ENCODE measurements at regions of chr1 and their contacts with region 1.

Region 1: GRCh38 chr1:32716312-32717148 is 14.0 kb upstream of the SYNC start:
- DNase-seq: peak; percentile 96 to 97
- H3K4me3 ChIP-seq: no peak overlapping the region; the same call in 1 of the 2 replicates
- H3K4me3 Mint-ChIP-seq: no peak overlapping the region
- H3K27ac Mint-ChIP-seq: peak overlapping the region; percentile 84
- H3K4me1 ChIP-seq: peaks cover 18% of the 10 kb centered on the region
- H3K4me1 Mint-ChIP-seq: peaks cover 8% of the 10 kb centered on the region
- H3K27me3 ChIP-seq: no peaks in the 10 kb centered on the region
- H3K27me3 Mint-ChIP-seq: no peaks in the 10 kb centered on the region
- CTCF ChIP-seq: no peak

Region 2: GRCh38 chr1:32729254-32730046 is 12.9 kb after region 1 on chr1:
- CTCF ChIA-PET with region 1: interaction called, 12 read pairs
- POLR2A ChIA-PET with region 1: interaction called, 4 read pairs
- intact Hi-C with region 1: no loop called
- DNase-seq: no peak
- H3K4me3 ChIP-seq: no peak overlapping the region
- H3K4me3 Mint-ChIP-seq: no peak overlapping the region
- H3K27ac Mint-ChIP-seq: no peak overlapping the region
- H3K4me1 ChIP-seq: peaks cover 5% of the 10 kb centered on the region
- H3K4me1 Mint-ChIP-seq: peaks cover 9% of the 10 kb centered on the region
- H3K27me3 ChIP-seq: no peaks in the 10 kb centered on the region
- H3K27me3 Mint-ChIP-seq: no peaks in the 10 kb centered on the region
- CTCF ChIP-seq: no peak

Region 3: DNA sequence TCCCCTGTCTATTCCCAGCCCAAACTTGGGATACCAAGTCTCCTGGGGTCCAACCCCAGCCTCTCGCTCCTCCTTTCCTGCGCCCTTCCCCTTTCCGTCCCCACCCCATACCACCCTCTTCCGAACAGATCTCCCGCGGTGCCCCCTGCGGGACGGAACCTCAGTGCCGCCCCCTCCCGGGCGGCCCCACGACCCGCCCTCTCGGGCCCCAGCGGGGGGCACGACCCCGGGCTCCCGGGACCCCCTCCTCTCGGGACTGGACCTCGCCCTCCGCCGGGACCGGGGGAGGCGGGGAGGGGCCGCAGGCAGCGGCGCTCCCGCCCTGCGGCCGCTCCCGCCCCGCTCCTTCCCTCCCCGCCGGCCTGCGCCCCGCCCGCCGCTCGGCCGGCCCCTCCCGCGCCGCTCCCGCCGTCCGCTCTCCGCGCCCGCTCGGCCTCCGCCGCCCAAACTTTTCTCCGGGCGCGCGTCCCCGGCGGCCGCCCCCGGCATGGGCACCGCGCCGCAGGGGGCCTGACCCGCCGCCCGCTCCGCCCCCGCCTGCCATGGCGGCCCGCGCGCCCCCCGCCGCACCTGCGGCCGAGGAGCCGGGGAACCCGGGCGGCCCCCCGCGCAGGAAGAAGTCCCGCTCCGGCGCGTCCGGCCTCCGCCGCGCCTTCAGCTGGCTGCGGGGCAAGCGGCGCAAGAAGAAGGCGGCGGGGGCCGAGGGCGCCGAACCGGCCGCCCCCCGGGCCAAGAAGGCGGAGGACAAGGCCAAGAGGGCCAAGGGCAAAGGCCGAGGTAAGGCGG is 25.1 kb after region 1 on chr1:
- CTCF ChIA-PET with region 1: interaction called, 10 read pairs
- POLR2A ChIA-PET with region 1: no interaction called
- intact Hi-C with region 1: loop called (anchors 2 kb)
- DNase-seq: peak in 1 of 2 experiments; percentile 57
- H3K4me3 ChIP-seq: peak overlapping the region; percentile 76
- H3K4me3 Mint-ChIP-seq: peak overlapping the region; percentile 76
- H3K27ac Mint-ChIP-seq: peak overlapping the region; percentile 53
- H3K4me1 ChIP-seq: peaks cover 39% of the 10 kb centered on the region
- H3K4me1 Mint-ChIP-seq: peaks cover 12% of the 10 kb centered on the region
- H3K27me3 ChIP-seq: no peaks in the 10 kb centered on the region
- H3K27me3 Mint-ChIP-seq: no peaks in the 10 kb centered on the region
- CTCF ChIP-seq: peak; percentile 37 to 49

Region 4: GRCh38 chr1:32761253-32761880 is 44.8 kb after region 1 on chr1:
- CTCF ChIA-PET with region 1: interaction called, 21 read pairs
- POLR2A ChIA-PET with region 1: no interaction called
- intact Hi-C with region 1: loop called (anchors 1 kb)
- DNase-seq: peak; percentile 23 to 69
- H3K4me3 ChIP-seq: no peak overlapping the region
- H3K4me3 Mint-ChIP-seq: peak overlapping the region; percentile 62
- H3K27ac Mint-ChIP-seq: peak overlapping the region; percentile 93
- H3K4me1 ChIP-seq: peaks cover 50% of the 10 kb centered on the region
- H3K4me1 Mint-ChIP-seq: peaks cover 46% of the 10 kb centered on the region
- H3K27me3 ChIP-seq: no peaks in the 10 kb centered on the region
- H3K27me3 Mint-ChIP-seq: no peaks in the 10 kb centered on the region
- CTCF ChIP-seq: no peak

Region 5: DNA sequence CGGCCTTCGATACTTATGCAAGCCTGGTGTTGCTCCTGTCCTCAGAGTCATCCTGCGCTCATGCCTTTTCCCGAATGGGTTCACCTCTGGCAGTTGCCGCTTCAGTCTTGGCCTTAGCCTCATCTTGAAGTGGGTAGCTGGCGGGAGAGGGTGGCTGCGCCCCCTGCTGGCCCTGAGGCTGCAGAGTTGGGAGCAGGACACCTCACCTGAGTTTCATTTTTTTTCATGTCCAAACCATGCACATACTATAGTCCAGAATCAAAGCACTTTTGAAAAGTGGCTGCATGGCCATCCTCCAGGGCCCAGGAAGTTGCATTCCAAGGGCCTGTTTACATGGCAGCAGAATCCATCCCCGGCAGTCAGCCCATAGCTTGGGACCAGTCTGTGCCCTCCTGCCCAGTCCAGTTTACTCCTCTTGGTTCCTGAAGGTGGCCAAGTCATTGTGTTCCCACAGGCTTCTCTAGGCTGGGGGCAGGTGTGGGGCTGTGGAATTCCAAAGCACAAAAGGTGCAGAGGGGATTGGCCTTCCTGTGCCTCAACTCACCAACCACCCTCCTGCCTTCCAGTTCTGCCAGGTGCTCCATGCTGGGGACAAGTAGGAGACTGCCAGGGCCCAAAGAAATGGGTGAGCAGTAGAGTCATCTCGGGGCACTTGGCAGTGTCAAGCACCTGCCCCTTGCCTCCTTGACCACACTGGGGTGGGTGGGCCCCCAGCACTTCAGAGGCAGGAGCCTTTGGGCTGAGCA is 56.7 kb after region 1 on chr1:
- CTCF ChIA-PET with region 1: interaction called, 79 read pairs
- POLR2A ChIA-PET with region 1: no interaction called
- intact Hi-C with region 1: loop called (anchors 1 kb)
- DNase-seq: peak; percentile 82 to 86
- H3K4me3 ChIP-seq: no peak overlapping the region
- H3K4me3 Mint-ChIP-seq: peak overlapping the region; percentile 35
- H3K27ac Mint-ChIP-seq: peak overlapping the region; percentile 73
- H3K4me1 ChIP-seq: peaks cover 6% of the 10 kb centered on the region; the same call in 1 of the 2 replicates
- H3K4me1 Mint-ChIP-seq: peaks cover 16% of the 10 kb centered on the region
- H3K27me3 ChIP-seq: no peaks in the 10 kb centered on the region
- H3K27me3 Mint-ChIP-seq: no peaks in the 10 kb centered on the region
- CTCF ChIP-seq: peak; percentile 74 to 79

Region 6: GRCh38 chr1:32801096-32801715 is 84.7 kb after region 1 on chr1:
- CTCF ChIA-PET with region 1: no interaction called
- POLR2A ChIA-PET with region 1: no interaction called
- intact Hi-C with region 1: no loop called
- DNase-seq: no peak
- H3K4me3 ChIP-seq: no peak overlapping the region
- H3K4me3 Mint-ChIP-seq: no peak overlapping the region
- H3K27ac Mint-ChIP-seq: no peak overlapping the region
- H3K4me1 ChIP-seq: no peaks in the 10 kb centered on the region
- H3K4me1 Mint-ChIP-seq: peaks cover 6% of the 10 kb centered on the region
- H3K27me3 ChIP-seq: no peaks in the 10 kb centered on the region
- H3K27me3 Mint-ChIP-seq: no peaks in the 10 kb centered on the region
- CTCF ChIP-seq: no peak

Region 7: GRCh38 chr1:33147997-33148314 is 431.4 kb after region 1 on chr1:
- CTCF ChIA-PET with region 1: no interaction called
- POLR2A ChIA-PET with region 1: no interaction called
- intact Hi-C with region 1: no loop called
- DNase-seq: no peak
- H3K4me3 ChIP-seq: no peak overlapping the region
- H3K4me3 Mint-ChIP-seq: no peak overlapping the region
- H3K27ac Mint-ChIP-seq: no peak overlapping the region
- H3K4me1 ChIP-seq: peaks cover 18% of the 10 kb centered on the region
- H3K4me1 Mint-ChIP-seq: peaks cover 11% of the 10 kb centered on the region
- H3K27me3 ChIP-seq: no peaks in the 10 kb centered on the region
- H3K27me3 Mint-ChIP-seq: no peaks in the 10 kb centered on the region
- CTCF ChIP-seq: no peak

Measured in Caco-2 (cell line).